Left ventricle myocardium superior (tissue), 1 donor: ENCODE measurements at regions of chr10 and their contacts with region 1.

Region 1: GRCh38 chr10:58952747-58953466 is 223.5 kb upstream of the PHYHIPL start:
- DNase-seq: no peak
- ATAC-seq: peak; percentile 74

Region 2: DNA sequence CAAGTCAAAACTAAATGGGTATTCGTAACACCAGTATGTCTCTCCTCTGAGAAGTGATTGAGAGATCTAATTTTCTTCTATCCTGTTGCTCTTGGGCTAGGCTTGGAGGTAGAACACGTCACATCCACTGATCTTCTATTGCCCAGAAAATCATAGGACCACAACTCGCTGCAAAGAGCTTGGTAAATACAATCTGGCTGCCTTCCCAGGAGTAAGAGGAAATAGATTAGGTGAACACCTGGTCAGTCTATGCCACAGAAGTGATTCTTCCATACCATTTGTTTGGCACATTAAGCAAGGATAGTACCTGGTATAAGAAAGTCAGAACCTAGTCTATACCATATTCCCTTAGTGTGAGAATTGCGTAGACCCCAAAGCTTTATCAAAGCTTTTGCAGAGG is 94.3 kb after region 1 on chr10:
- intact Hi-C with region 1: no loop called
- DNase-seq: no peak
- ATAC-seq: no peak

Region 3: GRCh38 chr10:59107147-59107546 is 154.2 kb after region 1 on chr10:
- intact Hi-C with region 1: no loop called
- DNase-seq: no peak
- ATAC-seq: no peak

Region 4: DNA sequence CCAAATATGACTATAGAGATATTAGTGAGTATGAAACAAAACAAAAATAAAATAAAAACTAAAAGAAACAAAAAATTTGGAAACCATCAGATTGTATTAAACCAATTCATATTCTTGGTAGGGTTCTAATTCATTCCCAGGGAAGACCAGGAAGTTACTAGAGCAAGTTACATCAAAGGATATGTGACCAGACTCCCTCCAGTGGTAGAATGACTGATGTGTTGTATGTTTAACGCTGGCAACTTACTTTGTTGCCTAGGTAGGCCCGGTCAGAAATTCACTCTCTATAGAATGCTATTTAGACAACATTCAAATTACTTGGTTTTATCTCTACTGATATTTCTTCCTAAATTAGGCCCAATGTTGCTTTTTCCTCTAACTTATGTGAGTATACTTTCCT is 228.8 kb after region 1 on chr10:
- intact Hi-C with region 1: loop called (anchors 5 kb)
- DNase-seq: no peak
- ATAC-seq: peak; percentile 60